ENCODE measurements at regions of chr7 and their contacts with region 1.

Region 1: GRCh38 chr7:149090397-149091195 is at the start of gene ZNF786:
- DNase-seq: peak; percentile 71 to 87
- H3K4me3 ChIP-seq: peak within 1 kb of the TSS; percentile 96
- H3K27ac ChIP-seq: peak within 1 kb of the TSS; percentile 85
- H3K4me1 ChIP-seq: no peaks in the 10 kb centered on the region; the same call in 1 of the 2 replicates
- H3K27me3 ChIP-seq: no peaks in the 10 kb centered on the region
- CTCF ChIP-seq: peak; percentile 92
- total RNA-seq, gene ZNF786: 7.0 and 8.4 TPM in 2 replicates

Region 2: DNA sequence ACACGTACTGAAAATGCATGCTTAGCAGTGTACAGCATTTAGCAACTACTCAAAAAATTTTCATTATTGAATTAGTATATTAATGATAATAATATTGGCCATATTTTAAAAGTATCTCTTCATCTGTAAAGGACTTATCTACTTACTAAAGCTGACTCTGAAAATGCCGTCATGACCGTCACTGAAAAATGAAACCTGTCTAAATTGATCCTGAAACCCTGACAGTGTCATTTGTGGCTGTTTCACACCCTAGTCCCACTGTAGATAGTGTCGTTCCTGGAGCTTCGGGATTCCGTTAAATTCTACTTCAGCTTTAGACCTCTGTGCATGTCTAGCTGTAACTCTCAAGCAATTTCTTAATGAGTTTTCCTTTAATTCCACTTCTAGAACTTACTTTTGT is 170.7 kb before region 1 on chr7:
- CTCF ChIA-PET with region 1: no interaction called
- POLR2A ChIA-PET with region 1: no interaction called
- intact Hi-C with region 1: no loop called
- DNase-seq: no peak
- H3K4me3 ChIP-seq: no peak overlapping the region
- H3K27ac ChIP-seq: no peak overlapping the region
- H3K4me1 ChIP-seq: peaks cover 5% of the 10 kb centered on the region
- H3K27me3 ChIP-seq: no peaks in the 10 kb centered on the region
- CTCF ChIP-seq: no peak

Region 3: GRCh38 chr7:148987010-148987750 is 103.4 kb before region 1 on chr7:
- CTCF ChIA-PET with region 1: no interaction called
- POLR2A ChIA-PET with region 1: no interaction called
- intact Hi-C with region 1: loop called (anchors 5 kb)
- DNase-seq: peak; percentile 86 to 91
- H3K4me3 ChIP-seq: peak overlapping the region; percentile 88
- H3K27ac ChIP-seq: peak overlapping the region; percentile 78
- H3K4me1 ChIP-seq: peaks cover 46% of the 10 kb centered on the region
- H3K27me3 ChIP-seq: no peaks in the 10 kb centered on the region
- CTCF ChIP-seq: no peak

Region 4: DNA sequence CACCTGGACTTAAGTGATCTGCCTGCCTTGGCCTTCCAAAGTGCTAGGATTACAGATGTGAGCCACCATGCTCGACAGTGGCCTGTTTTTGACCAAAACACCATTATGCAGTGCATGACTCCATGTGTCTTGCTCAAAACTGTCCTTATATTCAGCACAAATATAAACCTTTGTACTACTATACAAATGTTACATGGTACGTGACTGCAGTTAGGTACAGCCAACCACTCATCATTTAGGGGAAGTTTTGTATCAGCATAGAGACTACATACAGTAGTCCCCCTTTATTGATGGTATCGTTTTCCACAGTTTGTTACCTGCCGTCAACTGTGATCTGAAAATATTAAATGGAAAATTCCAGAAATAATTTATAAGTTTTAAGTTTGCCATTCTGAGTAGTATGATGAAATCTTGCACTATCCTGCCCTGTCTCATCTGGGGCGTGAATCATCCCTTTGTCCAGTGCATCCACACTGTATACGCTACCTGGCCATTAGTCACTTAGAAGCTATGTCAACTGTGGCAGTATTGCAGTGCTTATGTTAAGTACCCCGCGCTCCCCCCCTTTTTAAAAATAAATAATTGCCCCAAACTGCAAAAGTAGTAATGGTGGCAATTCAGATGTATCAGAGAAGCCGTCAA is 81.4 kb after region 1 on chr7:
- CTCF ChIA-PET with region 1: no interaction called
- POLR2A ChIA-PET with region 1: no interaction called
- intact Hi-C with region 1: no loop called
- DNase-seq: peak; percentile 17 to 79
- H3K4me3 ChIP-seq: no peak overlapping the region
- H3K27ac ChIP-seq: peak overlapping the region; percentile 96
- H3K4me1 ChIP-seq: peaks cover 17% of the 10 kb centered on the region
- H3K27me3 ChIP-seq: no peaks in the 10 kb centered on the region
- CTCF ChIP-seq: no peak

Region 5: GRCh38 chr7:149284850-149285626 is 194.4 kb after region 1 on chr7:
- CTCF ChIA-PET with region 1: no interaction called
- POLR2A ChIA-PET with region 1: no interaction called
- intact Hi-C with region 1: loop called (anchors 2 kb)
- DNase-seq: peak; percentile 90 to 100
- H3K4me3 ChIP-seq: peak overlapping the region; percentile 62
- H3K27ac ChIP-seq: no peak overlapping the region
- H3K4me1 ChIP-seq: peaks cover 25% of the 10 kb centered on the region
- H3K27me3 ChIP-seq: no peaks in the 10 kb centered on the region
- CTCF ChIP-seq: no peak

Region 6: DNA sequence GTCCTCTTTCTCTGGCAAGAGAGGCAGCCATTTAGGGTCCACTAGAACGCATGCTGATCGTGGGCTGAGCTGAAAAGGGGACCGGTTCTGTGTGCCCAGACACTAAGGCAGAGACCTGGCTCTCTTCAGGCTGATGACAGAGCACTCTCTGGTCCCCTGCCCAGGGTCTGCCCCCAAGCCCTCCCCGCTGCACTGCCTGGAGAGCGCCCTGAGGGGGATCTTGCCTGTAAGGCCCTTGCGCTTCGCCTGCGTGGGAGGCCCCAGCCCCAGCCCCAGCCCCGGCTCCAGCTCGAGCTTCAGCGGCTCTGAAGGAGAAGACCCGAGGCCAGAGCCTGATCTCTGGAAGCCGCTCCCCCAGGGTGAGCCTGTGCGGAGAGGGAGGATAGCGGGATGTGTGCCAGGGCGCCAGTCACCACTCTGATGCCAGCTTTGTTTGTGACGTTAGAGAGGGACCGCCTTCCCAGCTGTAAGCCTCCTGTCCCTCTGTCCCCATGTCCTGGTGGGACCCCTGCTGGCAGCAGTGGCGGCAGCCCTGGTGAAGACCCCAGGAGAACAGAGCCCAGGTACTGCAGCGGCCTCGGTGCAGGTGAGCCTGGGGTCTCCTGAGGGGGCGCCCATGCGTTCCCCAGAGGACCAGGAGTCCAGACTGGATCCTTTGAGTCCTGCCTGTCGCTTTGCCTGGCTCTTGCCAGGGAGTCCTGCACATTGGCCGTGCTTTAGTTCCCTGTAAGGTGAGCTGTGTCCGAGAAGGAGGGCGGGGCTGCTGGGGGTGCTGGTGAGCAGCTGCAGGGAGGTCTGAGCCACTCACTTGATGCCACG is 639.6 kb after region 1 on chr7:
- CTCF ChIA-PET with region 1: no interaction called
- POLR2A ChIA-PET with region 1: no interaction called
- intact Hi-C with region 1: no loop called
- DNase-seq: peak in 1 of 2 experiments; percentile 10
- H3K4me3 ChIP-seq: no peak overlapping the region
- H3K27ac ChIP-seq: no peak overlapping the region
- H3K4me1 ChIP-seq: peaks cover 11% of the 10 kb centered on the region
- H3K27me3 ChIP-seq: no peaks in the 10 kb centered on the region
- CTCF ChIP-seq: no peak